Endothelial cell of umbilical vein (primary cell): ENCODE measurements at regions of chr7 and their contacts with region 1.

Region 1: GRCh38 chr7:76020031-76020714 is 25.8 kb upstream of the TMEM120A start:
- DNase-seq: peak; percentile 71
- H3K4me3 ChIP-seq: no peak overlapping the region
- H3K27ac ChIP-seq: no peak overlapping the region
- H3K4me1 ChIP-seq: peaks cover 2% of the 10 kb centered on the region
- H3K27me3 ChIP-seq: no peaks in the 10 kb centered on the region
- CTCF ChIP-seq: peak; percentile 89 to 94
- POLR2A ChIP-seq: no peak

Region 2: GRCh38 chr7:75866489-75867389 is 153.4 kb before region 1 on chr7:
- CTCF ChIA-PET with region 1: interaction called, 267 read pairs
- POLR2A ChIA-PET with region 1: interaction called, 6 read pairs
- dilution Hi-C with region 1: no loop called
- intact Hi-C with region 1: loop called (anchors 1 kb)
- DNase-seq: peak; percentile 66
- H3K4me3 ChIP-seq: no peak overlapping the region
- H3K27ac ChIP-seq: no peak overlapping the region
- H3K4me1 ChIP-seq: no peaks in the 10 kb centered on the region
- H3K27me3 ChIP-seq: no peaks in the 10 kb centered on the region
- CTCF ChIP-seq: peak; percentile 84 to 95
- POLR2A ChIP-seq: no peak

Region 3: GRCh38 chr7:75878769-75879611 is 141.2 kb before region 1 on chr7 and contains the start of gene RHBDD2:
- CTCF ChIA-PET with region 1: interaction called, 11 read pairs
- POLR2A ChIA-PET with region 1: no interaction called
- dilution Hi-C with region 1: no loop called
- intact Hi-C with region 1: no loop called
- DNase-seq: peak; percentile 91
- H3K4me3 ChIP-seq: peak within 1 kb of the TSS; percentile 26 to 100 (median 72)
- H3K27ac ChIP-seq: peak within 1 kb of the TSS; percentile 4
- H3K4me1 ChIP-seq: peaks cover 11% of the 10 kb centered on the region
- H3K27me3 ChIP-seq: no peaks in the 10 kb centered on the region
- CTCF ChIP-seq: peak in 1 of 2 donors; percentile 11
- POLR2A ChIP-seq: peak; percentile 95
- total RNA-seq, gene RHBDD2: 36.7 and 44.6 TPM in 2 replicates

Region 4: GRCh38 chr7:75966190-75966961 is 53.8 kb before region 1 on chr7:
- CTCF ChIA-PET with region 1: interaction called, 10 read pairs
- POLR2A ChIA-PET with region 1: no interaction called
- dilution Hi-C with region 1: no loop called
- intact Hi-C with region 1: no loop called
- DNase-seq: no peak
- H3K4me3 ChIP-seq: no peak overlapping the region
- H3K27ac ChIP-seq: no peak overlapping the region
- H3K4me1 ChIP-seq: peaks cover 11% of the 10 kb centered on the region
- H3K27me3 ChIP-seq: no peaks in the 10 kb centered on the region
- CTCF ChIP-seq: no peak
- POLR2A ChIP-seq: no peak

Region 5: GRCh38 chr7:75994388-75995051 is 25.7 kb before region 1 on chr7 and contains the start of gene TMEM120A:
- CTCF ChIA-PET with region 1: interaction called, 12 read pairs
- POLR2A ChIA-PET with region 1: no interaction called
- dilution Hi-C with region 1: no loop called
- intact Hi-C with region 1: no loop called
- DNase-seq: peak; percentile 95
- H3K4me3 ChIP-seq: peak within 1 kb of the TSS; percentile 53 to 96 (median 57)
- H3K27ac ChIP-seq: peak within 1 kb of the TSS; percentile 40
- H3K4me1 ChIP-seq: peaks cover 4% of the 10 kb centered on the region
- H3K27me3 ChIP-seq: no peaks in the 10 kb centered on the region
- CTCF ChIP-seq: peak in 1 of 2 donors; percentile 19
- POLR2A ChIP-seq: peak; percentile 78
- total RNA-seq, gene TMEM120A: 38.6 and 47.3 TPM in 2 replicates

Region 6: GRCh38 chr7:76060842-76061241 is 40.7 kb after region 1 on chr7:
- CTCF ChIA-PET with region 1: no interaction called
- POLR2A ChIA-PET with region 1: no interaction called
- dilution Hi-C with region 1: no loop called
- intact Hi-C with region 1: no loop called
- DNase-seq: no peak
- H3K4me3 ChIP-seq: no peak overlapping the region
- H3K27ac ChIP-seq: no peak overlapping the region
- H3K4me1 ChIP-seq: no peaks in the 10 kb centered on the region
- H3K27me3 ChIP-seq: no peaks in the 10 kb centered on the region
- CTCF ChIP-seq: no peak
- POLR2A ChIP-seq: no peak

Region 7: DNA sequence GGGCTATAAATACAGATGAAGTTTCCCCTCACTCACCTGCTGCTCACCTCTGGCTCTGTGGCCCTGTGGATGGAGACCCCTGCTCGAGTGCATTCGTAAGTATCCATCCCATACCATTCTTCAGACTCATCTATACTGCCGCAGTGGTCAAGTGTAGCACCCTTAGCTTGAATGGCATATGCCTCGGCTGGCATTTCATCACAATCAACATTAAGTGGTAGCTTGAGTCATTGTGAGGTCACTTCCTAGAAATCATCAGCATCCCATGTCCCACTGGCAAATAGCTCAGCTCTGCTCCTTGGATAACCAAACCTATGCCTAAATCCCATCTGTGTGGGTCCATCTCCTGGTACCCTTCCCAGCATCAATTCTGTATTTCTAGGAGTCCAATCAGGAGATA is 65.9 kb after region 1 on chr7:
- CTCF ChIA-PET with region 1: no interaction called
- POLR2A ChIA-PET with region 1: no interaction called
- dilution Hi-C with region 1: no loop called
- intact Hi-C with region 1: no loop called
- DNase-seq: peak; percentile 49
- H3K4me3 ChIP-seq: no peak overlapping the region
- H3K27ac ChIP-seq: peak overlapping the region; percentile 55
- H3K4me1 ChIP-seq: peaks cover 20% of the 10 kb centered on the region
- H3K27me3 ChIP-seq: no peaks in the 10 kb centered on the region
- CTCF ChIP-seq: no peak
- POLR2A ChIP-seq: no peak

Region 8: DNA sequence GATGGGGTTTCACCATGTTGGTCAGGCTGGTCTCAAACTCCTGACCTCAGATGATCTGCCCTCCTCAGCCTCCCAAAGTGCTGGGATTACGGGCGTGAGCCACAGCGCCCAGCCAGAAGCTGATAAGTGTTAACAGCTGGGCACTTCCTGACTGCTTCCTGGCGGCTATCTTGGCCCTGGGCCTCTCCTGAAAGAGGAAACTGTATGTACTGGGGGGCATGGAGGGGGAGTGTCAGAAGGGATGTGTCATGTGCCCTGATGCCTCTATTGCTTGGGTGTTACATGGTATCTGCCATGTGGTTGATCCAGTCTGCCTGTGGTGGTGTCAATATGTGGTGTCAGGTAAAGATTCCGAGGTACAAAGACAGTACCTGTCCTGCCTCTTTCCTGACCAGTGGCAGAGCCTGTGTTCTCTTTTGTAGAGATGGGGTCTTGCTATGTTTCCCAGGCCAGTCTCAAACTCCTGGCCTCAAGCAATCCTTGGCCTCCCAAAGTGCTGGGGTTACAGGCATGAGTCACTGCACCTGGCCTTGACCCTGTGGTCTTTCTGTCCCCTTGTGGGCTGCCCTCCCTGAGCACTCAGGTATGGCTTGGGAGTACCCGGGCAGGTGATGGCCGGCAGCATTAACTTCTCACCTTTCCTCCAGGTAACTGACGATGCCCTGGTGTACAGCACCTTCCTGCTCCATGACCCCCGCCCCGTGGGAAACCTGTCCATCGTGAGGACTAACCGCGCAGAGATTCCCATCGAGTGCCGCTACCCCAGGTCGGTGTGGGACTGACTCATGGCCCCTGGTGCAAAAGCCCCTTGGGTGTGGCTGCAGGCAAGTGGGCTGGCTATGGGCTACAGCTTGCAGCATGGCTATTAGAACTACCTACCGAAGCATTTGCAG is 408.9 kb after region 1 on chr7:
- CTCF ChIA-PET with region 1: no interaction called
- POLR2A ChIA-PET with region 1: no interaction called
- dilution Hi-C with region 1: no loop called
- intact Hi-C with region 1: no loop called
- DNase-seq: peak; percentile 49
- H3K4me3 ChIP-seq: no peak overlapping the region
- H3K27ac ChIP-seq: no peak overlapping the region
- H3K4me1 ChIP-seq: peaks cover 9% of the 10 kb centered on the region
- H3K27me3 ChIP-seq: no peaks in the 10 kb centered on the region
- CTCF ChIP-seq: no peak
- POLR2A ChIP-seq: no peak